Aorta (tissue), 5 donors: ENCODE measurements at regions of chr2 and their contacts with region 1.

Region 1: DNA sequence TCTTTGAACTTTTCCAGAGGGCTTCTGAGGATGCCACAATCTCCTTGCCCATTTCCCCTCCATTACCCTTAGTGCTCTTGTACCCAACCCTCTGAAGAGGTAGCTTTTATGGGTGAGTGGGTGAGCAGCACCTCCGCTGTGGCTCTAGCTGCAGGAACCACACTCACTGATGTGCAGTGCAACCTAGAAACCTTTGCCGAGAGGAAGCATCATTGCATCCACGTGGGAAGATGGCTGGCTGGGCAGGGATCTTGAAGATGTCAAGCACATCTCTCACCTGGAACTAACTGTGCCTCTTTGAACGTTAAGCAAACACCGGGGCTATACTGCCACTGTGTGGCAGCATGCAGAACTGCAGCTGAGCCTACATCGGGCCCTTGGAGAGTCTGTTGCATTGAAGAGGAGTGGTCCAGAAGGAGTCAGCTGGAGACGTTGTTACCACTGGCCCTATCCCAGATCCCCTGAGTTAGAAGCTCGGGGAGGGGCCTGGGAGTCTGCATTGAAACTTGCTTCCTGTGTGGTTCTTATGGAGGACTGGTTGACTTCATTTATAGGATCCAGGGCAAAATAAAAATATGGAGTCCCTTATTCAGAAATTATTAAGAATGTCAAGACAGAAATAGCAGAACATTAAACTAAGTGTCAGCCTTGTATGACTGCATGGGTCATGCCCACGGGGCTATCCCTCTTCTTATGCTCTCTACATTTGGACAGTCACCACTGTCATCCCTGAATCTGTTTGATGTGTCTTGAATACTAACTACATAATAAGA is 28.7 kb downstream of the IGFBP5 start:
- DNase-seq: peak; percentile 69 to 87
- ATAC-seq: peak; percentile 79
- H3K4me3 ChIP-seq: no peak overlapping the region
- H3K27ac ChIP-seq: no peak overlapping the region
- H3K4me1 ChIP-seq: no peaks in the 10 kb centered on the region
- H3K27me3 ChIP-seq: no peaks in the 10 kb centered on the region

Region 2: DNA sequence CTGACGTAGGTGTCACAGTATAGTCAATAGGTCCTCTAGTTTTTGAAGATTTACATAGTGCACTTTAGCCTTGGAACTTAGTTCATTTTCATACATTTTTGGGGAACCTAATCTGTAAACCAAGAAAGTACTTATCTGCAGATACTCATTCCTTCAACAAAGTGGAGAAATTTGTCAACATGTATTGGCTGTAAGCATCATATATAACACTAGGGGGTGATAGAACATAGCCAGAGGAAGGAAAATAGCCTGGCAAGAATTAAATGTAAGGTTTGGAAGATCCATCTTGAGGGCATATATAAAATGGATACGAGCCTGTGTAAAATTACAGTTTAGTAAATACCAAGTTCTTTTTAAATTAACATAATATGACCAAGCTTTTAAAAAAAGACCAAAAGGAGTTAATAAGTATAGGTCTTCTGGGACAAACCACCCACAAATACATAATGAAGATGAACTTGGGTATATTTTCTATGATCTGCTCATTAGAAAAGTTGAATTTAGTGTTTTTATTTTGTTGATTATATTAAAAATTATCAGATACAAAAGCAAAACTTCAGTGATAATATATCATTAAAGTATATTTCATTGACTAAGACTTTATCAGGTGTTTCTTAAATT is 149.8 kb before region 1 on chr2:
- intact Hi-C with region 1: loop called (anchors 1 kb)
- DNase-seq: no peak
- ATAC-seq: peak; percentile 74
- H3K4me3 ChIP-seq: no peak overlapping the region
- H3K27ac ChIP-seq: no peak overlapping the region
- H3K4me1 ChIP-seq: peaks cover 0 to 4% of the 10 kb centered on the region in 2 donors
- H3K27me3 ChIP-seq: no peaks in the 10 kb centered on the region

Region 3: DNA sequence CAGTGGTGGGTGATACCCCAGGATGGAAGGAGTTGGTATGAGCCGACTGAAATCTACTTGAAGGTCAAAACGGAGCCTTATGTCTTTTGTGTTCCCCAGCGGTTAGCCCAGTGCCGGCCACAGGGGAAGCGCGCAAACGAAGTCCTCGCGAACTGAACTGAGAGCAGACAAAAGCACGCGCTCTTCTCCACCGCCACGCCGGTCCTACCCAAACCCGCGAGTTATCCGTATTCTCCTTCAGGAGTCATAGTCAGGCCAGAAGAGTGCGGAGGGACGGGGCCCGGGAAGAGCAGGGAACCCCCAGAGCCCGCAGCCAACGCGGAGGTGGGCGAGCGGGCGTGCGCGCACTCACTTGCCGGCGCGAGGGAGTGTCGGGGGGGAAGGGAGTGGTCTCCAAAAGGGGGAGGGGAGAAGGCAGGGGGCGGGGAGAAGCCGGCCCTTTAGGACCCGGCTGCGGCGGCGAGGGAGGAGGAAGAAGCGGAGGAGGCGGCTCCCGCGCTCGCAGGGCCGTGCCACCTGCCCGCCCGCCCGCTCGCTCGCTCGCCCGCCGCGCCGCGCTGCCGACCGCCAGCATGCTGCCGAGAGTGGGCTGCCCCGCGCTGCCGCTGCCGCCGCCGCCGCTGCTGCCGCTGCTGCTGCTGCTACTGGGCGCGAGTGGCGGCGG is 33.6 kb before region 1 on chr2 and contains the start of gene IGFBP2:
- intact Hi-C with region 1: no loop called
- DNase-seq: peak; percentile 77 to 89
- ATAC-seq: peak; percentile 48
- H3K4me3 ChIP-seq: peak within 1 kb of the TSS; percentile 96 to 99
- H3K27ac ChIP-seq: peak within 1 kb of the TSS; percentile 20 to 83
- H3K4me1 ChIP-seq: no peaks in the 10 kb centered on the region
- H3K27me3 ChIP-seq: no peaks in the 10 kb centered on the region
- total RNA-seq, gene IGFBP2: 657 to 663 TPM

Region 4: DNA sequence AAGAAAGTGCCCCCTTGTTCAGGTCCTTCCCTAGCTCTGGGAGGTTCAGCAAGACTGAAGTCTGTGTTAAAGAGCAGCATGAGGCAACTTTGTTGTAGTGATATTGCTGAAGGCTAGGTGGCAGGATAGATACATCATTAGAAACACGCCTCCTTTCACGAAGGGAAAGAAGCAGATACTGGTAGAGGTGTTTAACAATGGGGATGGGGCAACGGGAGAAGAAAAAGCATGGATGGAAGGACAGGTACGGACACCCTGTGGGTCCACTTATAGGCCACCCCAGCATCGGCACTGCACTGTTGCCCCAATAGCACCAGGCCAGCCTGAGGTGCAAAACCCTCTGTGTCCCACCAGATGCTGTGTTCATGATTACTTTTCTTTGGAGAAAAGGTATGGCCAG is 32.2 kb after region 1 on chr2:
- intact Hi-C with region 1: no loop called
- DNase-seq: peak in 1 of 2 donors; percentile 49
- ATAC-seq: peak; percentile 49
- H3K4me3 ChIP-seq: no peak overlapping the region
- H3K27ac ChIP-seq: no peak overlapping the region
- H3K4me1 ChIP-seq: peaks cover 0 to 7% of the 10 kb centered on the region in 2 donors
- H3K27me3 ChIP-seq: no peaks in the 10 kb centered on the region

Region 5: GRCh38 chr2:216717491-216717901 is 50.8 kb after region 1 on chr2:
- intact Hi-C with region 1: no loop called
- DNase-seq: no peak
- ATAC-seq: no peak
- H3K4me3 ChIP-seq: no peak overlapping the region
- H3K27ac ChIP-seq: no peak overlapping the region
- H3K4me1 ChIP-seq: peaks cover 0 to 5% of the 10 kb centered on the region in 2 donors
- H3K27me3 ChIP-seq: no peaks in the 10 kb centered on the region